Left cardiac atrium (tissue), 4 donors: ENCODE measurements at regions of chr15 and their contacts with region 1.

Region 1: DNA sequence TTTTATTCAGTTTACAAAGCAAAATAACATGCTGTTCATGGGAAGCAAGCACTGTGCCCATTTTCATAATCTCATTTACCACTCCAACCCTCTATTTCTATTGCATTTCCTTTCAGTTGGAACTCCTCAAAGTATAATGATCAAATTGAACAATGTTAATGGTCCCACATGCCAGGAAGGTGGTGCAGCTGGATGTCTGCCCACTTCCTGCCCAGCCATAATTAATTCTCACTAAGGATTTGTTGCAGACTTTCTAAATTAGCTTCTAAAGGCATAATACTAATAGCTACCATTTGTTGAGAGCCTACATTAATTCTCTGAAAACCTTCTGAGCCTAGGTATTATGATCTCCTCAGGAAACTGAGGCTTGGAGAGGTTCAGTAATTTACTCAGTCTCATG is 316.1 kb upstream of the TPM1 start:
- DNase-seq: no peak
- ATAC-seq: no peak

Region 2: GRCh38 chr15:62672268-62672667 is 54.2 kb before region 1 on chr15:
- intact Hi-C with region 1: loop called in 1 of 2 experiments (anchors 10 kb)
- DNase-seq: no peak
- ATAC-seq: no peak